ENCODE measurements at regions of chr7 and their contacts with region 1.

Region 1: GRCh38 chr7:106870983-106871410 is 5.9 kb downstream of the PIK3CG start:
- DNase-seq: no peak
- H3K4me3 Mint-ChIP-seq: peak overlapping the region; percentile 43
- H3K27ac Mint-ChIP-seq: peak overlapping the region; percentile 64
- H3K4me1 Mint-ChIP-seq: peaks cover 75% of the 10 kb centered on the region
- H3K27me3 Mint-ChIP-seq: no peaks in the 10 kb centered on the region

Region 2: DNA sequence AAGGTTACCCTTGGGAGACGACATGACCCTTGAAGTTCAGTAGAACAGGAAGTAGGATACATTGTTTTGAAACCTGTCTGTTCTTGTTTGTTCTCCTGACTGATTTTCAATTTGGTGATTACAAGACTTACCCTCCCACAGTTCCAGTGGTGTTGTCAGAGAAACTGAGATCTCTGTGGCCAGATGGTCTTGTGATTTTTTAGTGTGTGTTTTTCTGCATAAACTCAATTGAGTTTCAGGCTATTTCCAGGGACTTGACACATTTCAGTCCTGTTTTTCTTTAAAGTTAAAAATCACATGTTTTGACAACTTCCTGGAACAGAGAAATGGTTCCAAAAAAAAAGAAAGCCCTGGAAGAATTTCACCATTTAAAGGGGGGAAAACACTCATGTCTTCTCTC is 16.4 kb after region 1 on chr7:
- intact Hi-C with region 1: loop called (anchors 1 kb)
- DNase-seq: no peak
- H3K4me3 Mint-ChIP-seq: no peak overlapping the region
- H3K27ac Mint-ChIP-seq: peak overlapping the region; percentile 83
- H3K4me1 Mint-ChIP-seq: peaks cover 41% of the 10 kb centered on the region
- H3K27me3 Mint-ChIP-seq: no peaks in the 10 kb centered on the region